Calu3 (cell line): ENCODE measurements at regions of chr18 and their contacts with region 1.

Region 1: GRCh38 chr18:70491734-70492348 is 203.0 kb downstream of the SOCS6 start:
- DNase-seq: peak; percentile 75
- H3K4me3 Mint-ChIP-seq: no peak overlapping the region
- H3K27ac Mint-ChIP-seq: no peak overlapping the region
- H3K4me1 Mint-ChIP-seq: peaks cover 8% of the 10 kb centered on the region
- H3K27me3 Mint-ChIP-seq: no peaks in the 10 kb centered on the region
- CTCF ChIP-seq: peak; percentile 70

Region 2: DNA sequence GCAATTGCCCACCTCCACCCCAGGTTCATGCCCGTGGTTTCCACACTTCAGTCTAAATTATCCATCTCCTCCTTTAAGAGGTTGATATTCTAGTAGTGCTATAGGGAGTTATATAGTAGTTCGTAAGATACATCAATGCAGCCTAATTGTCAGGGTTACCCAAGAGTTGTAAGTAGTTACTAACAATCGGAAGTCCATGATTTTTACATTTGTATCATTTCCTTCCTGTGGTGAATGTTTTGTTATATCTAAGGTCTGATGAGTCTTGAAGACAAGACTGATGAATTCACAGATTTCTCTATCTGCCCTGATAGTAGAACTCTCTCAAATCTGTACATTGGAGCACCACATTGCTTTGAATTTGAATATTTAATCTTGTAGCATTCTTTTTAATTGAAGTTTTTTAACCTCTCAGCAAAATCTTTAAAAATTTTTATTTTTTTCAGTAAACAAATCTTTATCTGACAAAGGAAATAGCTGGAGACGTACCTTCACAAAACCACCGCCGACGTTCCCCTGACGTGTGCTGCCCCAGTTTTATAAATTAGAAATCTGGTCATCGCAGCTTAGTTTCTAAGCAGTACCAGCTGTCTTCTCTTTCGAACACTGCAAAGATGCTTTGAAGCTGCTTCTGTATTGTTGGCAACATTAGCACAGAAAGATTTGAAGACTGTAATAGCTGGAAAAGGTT is 61.5 kb after region 1 on chr18:
- CTCF ChIA-PET with region 1: no interaction called
- intact Hi-C with region 1: no loop called
- DNase-seq: no peak
- H3K4me3 Mint-ChIP-seq: no peak overlapping the region
- H3K27ac Mint-ChIP-seq: no peak overlapping the region
- H3K4me1 Mint-ChIP-seq: peaks cover 11% of the 10 kb centered on the region
- H3K27me3 Mint-ChIP-seq: no peaks in the 10 kb centered on the region
- CTCF ChIP-seq: no peak

Region 3: GRCh38 chr18:71388148-71388547 is 896.3 kb after region 1 on chr18:
- CTCF ChIA-PET with region 1: no interaction called
- intact Hi-C with region 1: loop called (anchors 10 kb)
- DNase-seq: no peak
- H3K4me3 Mint-ChIP-seq: no peak overlapping the region
- H3K27ac Mint-ChIP-seq: no peak overlapping the region
- H3K4me1 Mint-ChIP-seq: no peaks in the 10 kb centered on the region
- H3K27me3 Mint-ChIP-seq: no peaks in the 10 kb centered on the region
- CTCF ChIP-seq: no peak

Region 4: DNA sequence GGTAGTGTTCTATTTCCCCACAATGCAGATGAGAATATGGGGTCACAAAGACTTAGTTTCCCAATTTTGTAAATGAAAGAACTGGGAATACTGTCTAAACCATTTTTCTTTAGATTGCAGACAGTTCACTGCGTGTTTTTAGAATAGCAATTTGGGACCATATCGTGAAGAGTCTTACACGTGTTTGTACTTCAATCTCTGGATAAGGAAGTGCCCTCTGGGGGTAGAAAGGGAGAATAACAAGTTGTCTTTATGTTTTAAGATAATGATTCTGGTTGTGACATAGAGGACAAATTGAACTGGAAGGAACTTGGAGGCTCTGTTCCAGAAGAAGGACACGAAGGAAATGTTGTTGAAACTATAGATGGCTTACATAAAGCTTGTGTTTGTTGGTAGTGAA is 1594.6 kb after region 1 on chr18:
- CTCF ChIA-PET with region 1: no interaction called
- intact Hi-C with region 1: loop called (anchors 2 kb)
- DNase-seq: no peak
- H3K4me3 Mint-ChIP-seq: no peak overlapping the region
- H3K27ac Mint-ChIP-seq: no peak overlapping the region
- H3K4me1 Mint-ChIP-seq: peaks cover 9% of the 10 kb centered on the region
- H3K27me3 Mint-ChIP-seq: no peaks in the 10 kb centered on the region
- CTCF ChIP-seq: peak; percentile 62